ENCODE measurements at regions of chr10 and their contacts with region 1.

Region 1: GRCh38 chr10:93471110-93471651 is 11.0 kb downstream of the MYOF start:
- DNase-seq: peak; percentile 95
- ATAC-seq: peak; percentile 37
- H3K4me3 ChIP-seq: peak overlapping the region in 1 of 2 experiments; percentile 36; a peak in 1 of 4 replicates
- H3K27ac ChIP-seq: peak overlapping the region; percentile 98
- H3K4me1 ChIP-seq: peaks cover 83 to 96% of the 10 kb centered on the region in 2 experiments
- H3K27me3 ChIP-seq: no peaks in the 10 kb centered on the region
- CTCF ChIP-seq: no peak
- POLR2A ChIP-seq: no peak
- RAD21 ChIP-seq: no peak

Region 2: DNA sequence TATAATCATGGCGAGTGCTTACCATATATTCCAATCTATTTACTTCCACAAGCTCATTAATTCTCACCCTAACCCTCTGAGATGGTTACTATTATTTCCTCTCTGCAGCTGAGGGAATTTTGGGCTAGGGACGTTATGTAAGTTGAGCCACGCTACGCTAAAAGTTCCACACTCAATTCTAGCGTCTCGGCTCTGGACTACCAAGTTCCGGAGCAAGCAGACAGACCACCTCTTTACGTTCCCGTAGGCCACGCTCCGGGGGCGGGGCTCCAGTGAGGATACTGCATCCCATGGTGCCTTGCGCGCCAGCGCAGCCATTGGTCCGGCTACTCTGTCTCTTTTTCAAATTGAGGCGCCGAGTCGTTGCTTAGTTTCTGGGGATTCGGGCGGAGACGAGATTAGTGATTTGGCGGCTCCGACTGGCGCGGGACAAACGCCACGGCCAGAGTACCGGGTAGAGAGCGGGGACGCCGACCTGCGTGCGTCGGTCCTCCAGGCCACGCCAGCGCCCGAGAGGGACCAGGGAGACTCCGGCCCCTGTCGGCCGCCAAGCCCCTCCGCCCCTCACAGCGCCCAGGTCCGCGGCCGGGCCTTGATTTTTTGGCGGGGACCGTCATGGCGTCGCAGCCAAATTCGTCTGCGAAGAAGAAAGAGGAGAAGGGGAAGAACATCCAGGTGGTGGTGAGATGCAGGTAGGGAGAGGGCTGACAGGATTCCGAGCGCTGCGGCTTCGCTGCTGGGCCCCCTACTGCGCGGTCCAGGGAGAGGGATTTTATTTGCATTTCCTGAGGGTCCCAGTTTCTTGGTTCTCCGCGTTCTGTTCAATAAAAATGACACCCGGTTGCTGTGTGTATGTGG is 878.2 kb before region 1 on chr10 and contains the start of gene KIF11:
- CTCF ChIA-PET with region 1: no interaction called
- POLR2A ChIA-PET with region 1: no interaction called
- RAD21 ChIA-PET with region 1: no interaction called
- intact Hi-C with region 1: no loop called
- DNase-seq: peak; percentile 93
- ATAC-seq: peak; percentile 78
- H3K4me3 ChIP-seq: peak within 1 kb of the TSS; percentile 84 to 92
- H3K27ac ChIP-seq: peak within 1 kb of the TSS; percentile 86
- H3K4me1 ChIP-seq: peaks cover 6 to 19% of the 10 kb centered on the region in 2 experiments; a peak in 3 of 4 replicates
- H3K27me3 ChIP-seq: no peaks in the 10 kb centered on the region
- CTCF ChIP-seq: no peak
- POLR2A ChIP-seq: peak; percentile 98
- RAD21 ChIP-seq: no peak
- total RNA-seq, gene KIF11: 33.8 TPM

Region 3: DNA sequence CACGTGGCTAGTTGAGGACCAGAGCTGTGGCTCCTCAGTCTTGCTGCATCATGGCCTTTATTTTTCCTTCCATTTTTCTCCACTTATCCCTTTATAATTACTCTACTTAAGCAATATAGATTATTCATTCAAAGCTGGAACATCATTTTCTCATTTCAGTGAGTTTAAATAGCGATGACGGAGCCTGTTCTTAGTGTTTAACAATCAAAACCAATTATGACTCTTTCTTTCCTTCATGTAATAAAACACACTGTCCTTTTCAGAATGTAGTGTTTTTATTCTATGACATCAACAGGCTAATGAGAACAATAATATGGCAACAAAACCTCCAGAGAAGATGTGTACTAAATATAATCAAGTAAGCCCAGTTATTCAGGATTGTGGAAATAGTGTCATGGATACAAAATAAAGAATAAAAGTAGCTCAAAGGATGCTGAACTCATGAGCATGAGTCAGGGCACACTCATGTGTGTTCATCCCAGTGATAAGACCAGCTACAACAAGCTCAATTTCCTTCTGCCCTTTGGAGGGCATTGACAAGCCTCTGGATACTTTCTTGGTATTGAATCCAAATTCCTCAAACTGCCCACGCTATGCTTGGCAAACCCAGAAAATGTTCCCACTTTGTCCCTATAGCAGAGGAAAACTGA is 209.1 kb before region 1 on chr10:
- CTCF ChIA-PET with region 1: no interaction called
- POLR2A ChIA-PET with region 1: no interaction called
- RAD21 ChIA-PET with region 1: no interaction called
- intact Hi-C with region 1: no loop called
- DNase-seq: no peak
- ATAC-seq: no peak
- H3K4me3 ChIP-seq: no peak overlapping the region
- H3K27ac ChIP-seq: no peak overlapping the region
- H3K4me1 ChIP-seq: no peaks in the 10 kb centered on the region; a peak in 1 of 4 replicates
- H3K27me3 ChIP-seq: no peaks in the 10 kb centered on the region
- CTCF ChIP-seq: no peak
- POLR2A ChIP-seq: no peak
- RAD21 ChIP-seq: no peak

Region 4: DNA sequence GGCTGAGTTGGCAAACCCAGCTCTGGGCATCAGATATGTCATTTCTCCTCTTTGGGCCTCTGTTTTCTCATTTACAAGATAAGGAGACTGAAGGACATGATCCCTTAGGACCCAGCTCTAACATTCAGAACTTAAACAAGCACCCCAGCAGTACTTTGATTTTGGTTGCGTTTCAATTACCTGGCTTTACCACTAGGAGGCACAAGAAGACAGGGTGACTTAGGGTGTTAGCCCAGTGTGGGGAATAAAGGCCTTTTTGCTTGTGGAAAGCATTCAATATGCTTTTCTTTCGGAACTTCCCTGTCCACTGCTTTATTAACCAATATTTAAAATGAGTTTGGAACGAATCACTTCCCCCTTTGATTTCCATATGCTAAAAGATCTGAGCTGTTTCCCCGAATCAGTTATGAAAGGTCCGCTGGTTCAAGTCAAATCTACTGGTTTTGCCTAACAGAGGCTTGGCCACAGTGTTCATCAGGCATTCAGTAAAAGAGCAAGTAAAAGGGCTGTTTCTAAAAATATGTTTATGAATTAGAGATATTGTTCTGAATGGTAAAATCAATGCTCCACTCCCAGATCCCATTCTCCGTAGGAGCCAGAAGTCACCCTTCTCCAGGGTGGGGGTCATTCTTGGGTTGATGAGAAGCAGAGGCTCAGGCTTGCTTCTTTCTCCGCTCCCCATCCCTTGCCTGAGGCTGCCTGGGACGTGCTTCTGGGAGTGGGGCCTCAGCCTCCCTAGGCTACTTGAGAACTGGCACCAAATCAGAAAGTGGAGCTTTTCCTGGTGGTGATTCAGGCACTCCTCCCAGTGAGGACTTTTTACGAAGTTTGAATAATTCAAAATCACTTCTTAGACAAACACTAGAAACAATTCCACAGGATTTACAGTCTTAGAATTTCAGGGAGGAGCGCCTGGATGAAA is 94.5 kb before region 1 on chr10:
- CTCF ChIA-PET with region 1: interaction called, 27 read pairs
- POLR2A ChIA-PET with region 1: interaction called, 10 read pairs
- RAD21 ChIA-PET with region 1: interaction called in 1 of 2 experiments, 4 read pairs
- intact Hi-C with region 1: no loop called
- DNase-seq: peak; percentile 80
- ATAC-seq: peak; percentile 83
- H3K4me3 ChIP-seq: no peak overlapping the region
- H3K27ac ChIP-seq: peak overlapping the region; percentile 80
- H3K4me1 ChIP-seq: peaks cover 29 to 49% of the 10 kb centered on the region in 2 experiments
- H3K27me3 ChIP-seq: no peaks in the 10 kb centered on the region
- CTCF ChIP-seq: peak; percentile 84 to 91 (median 90); a peak in 5 of 6 replicates
- POLR2A ChIP-seq: no peak
- RAD21 ChIP-seq: peak; percentile 98

Region 5: GRCh38 chr10:93383562-93383981 is 87.6 kb before region 1 on chr10:
- CTCF ChIA-PET with region 1: interaction called, 3 read pairs
- POLR2A ChIA-PET with region 1: interaction called, 13 read pairs
- RAD21 ChIA-PET with region 1: interaction called in 1 of 2 experiments, 7 read pairs
- intact Hi-C with region 1: no loop called
- DNase-seq: no peak
- ATAC-seq: peak; percentile 69
- H3K4me3 ChIP-seq: peak overlapping the region; percentile 33 to 46
- H3K27ac ChIP-seq: peak overlapping the region; percentile 87
- H3K4me1 ChIP-seq: peaks cover 52 to 85% of the 10 kb centered on the region in 2 experiments
- H3K27me3 ChIP-seq: no peaks in the 10 kb centered on the region
- CTCF ChIP-seq: no peak
- POLR2A ChIP-seq: no peak
- RAD21 ChIP-seq: no peak

Region 6: DNA sequence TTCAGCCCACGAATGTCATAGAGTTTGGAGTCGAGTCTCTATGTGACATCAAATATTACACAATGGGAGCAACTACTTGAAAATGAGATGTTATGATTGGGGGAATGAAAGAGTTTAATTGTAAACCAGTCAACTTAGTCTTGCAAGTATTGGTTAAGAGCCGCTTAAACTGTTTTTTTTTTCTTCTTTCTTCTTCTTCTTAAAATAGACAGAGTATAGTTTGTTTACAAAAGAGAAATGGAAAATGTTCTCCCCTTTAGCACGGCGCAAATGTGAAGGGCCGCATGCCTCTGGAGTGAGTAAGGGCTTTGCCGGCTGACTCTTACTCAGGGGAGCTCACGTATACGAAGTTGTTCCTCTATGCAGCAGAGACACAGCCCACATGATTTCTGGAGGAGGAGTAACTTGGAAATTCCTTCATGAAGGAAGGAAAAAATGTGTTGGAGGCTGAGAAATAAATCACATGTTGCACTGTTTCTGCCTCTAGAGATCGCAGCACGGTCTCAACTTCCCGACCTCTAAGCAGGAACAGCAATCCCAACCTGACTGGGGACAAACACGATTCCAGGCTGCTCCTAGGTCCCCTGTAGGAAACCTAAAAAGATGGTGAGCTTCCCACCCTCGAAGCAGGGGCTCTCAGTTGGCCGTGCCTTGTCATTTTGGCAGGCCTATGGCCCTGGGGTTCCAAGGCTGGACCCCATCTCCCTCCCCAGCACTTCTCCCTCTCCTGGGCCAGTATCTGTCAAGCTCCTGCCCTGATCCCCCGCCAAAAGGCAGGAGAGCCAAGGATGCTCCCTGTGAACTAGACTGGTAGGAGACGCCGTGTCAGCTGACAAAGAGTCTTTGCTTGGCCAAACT is 33.9 kb before region 1 on chr10:
- CTCF ChIA-PET with region 1: interaction called, 4 read pairs
- POLR2A ChIA-PET with region 1: interaction called, 22 read pairs
- RAD21 ChIA-PET with region 1: interaction called in 1 of 2 experiments, 4 read pairs
- intact Hi-C with region 1: loop called (anchors 1 kb)
- DNase-seq: peak; percentile 86
- ATAC-seq: peak; percentile 79
- H3K4me3 ChIP-seq: peak overlapping the region; percentile 12 to 35
- H3K27ac ChIP-seq: peak overlapping the region; percentile 100
- H3K4me1 ChIP-seq: peaks cover 88 to 96% of the 10 kb centered on the region in 2 experiments
- H3K27me3 ChIP-seq: no peaks in the 10 kb centered on the region
- CTCF ChIP-seq: no peak
- POLR2A ChIP-seq: no peak
- RAD21 ChIP-seq: peak; percentile 22; the same call in 1 of the 2 replicates

Region 7: DNA sequence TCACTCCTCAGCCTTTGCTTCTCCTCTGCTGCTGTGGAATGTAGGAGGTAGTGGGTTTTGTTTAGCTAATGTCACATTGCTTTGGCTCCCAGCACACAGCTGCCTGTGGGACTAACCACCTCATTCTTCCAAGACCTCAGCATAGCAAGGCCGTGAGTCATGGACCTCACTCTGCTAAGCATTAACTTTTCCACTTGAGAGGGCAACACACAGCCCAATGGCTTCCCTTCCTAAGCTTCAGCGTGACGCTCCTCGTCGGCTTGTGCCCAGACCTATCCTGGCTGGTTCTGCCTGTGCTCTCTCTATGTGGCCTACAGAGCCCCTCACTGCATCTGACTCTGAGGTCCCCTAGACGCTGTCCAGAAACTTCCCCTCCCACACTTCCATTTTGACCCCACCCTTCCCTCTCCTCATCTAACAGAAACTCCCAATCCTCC is 12.3 kb before region 1 on chr10:
- CTCF ChIA-PET with region 1: no interaction called
- POLR2A ChIA-PET with region 1: interaction called, 49 read pairs
- RAD21 ChIA-PET with region 1: interaction called in 1 of 2 experiments, 3 read pairs
- intact Hi-C with region 1: no loop called
- DNase-seq: peak; percentile 97
- ATAC-seq: peak; percentile 81
- H3K4me3 ChIP-seq: peak overlapping the region; percentile 18 to 32
- H3K27ac ChIP-seq: peak overlapping the region; percentile 97
- H3K4me1 ChIP-seq: peaks cover 83 to 90% of the 10 kb centered on the region in 2 experiments
- H3K27me3 ChIP-seq: no peaks in the 10 kb centered on the region
- CTCF ChIP-seq: no peak
- POLR2A ChIP-seq: no peak
- RAD21 ChIP-seq: no peak

Region 8: GRCh38 chr10:93541402-93542357 is 70.5 kb after region 1 on chr10:
- CTCF ChIA-PET with region 1: no interaction called
- POLR2A ChIA-PET with region 1: no interaction called
- RAD21 ChIA-PET with region 1: no interaction called
- intact Hi-C with region 1: no loop called
- DNase-seq: peak; percentile 27
- ATAC-seq: peak; percentile 99
- H3K4me3 ChIP-seq: no peak overlapping the region
- H3K27ac ChIP-seq: no peak overlapping the region
- H3K4me1 ChIP-seq: no peaks in the 10 kb centered on the region
- H3K27me3 ChIP-seq: no peaks in the 10 kb centered on the region
- CTCF ChIP-seq: peak; percentile 43 to 95 (median 93); a peak in 5 of 6 replicates
- POLR2A ChIP-seq: no peak
- RAD21 ChIP-seq: peak; percentile 62

Region 9: GRCh38 chr10:93999401-93999851 is 528.2 kb after region 1 on chr10:
- CTCF ChIA-PET with region 1: no interaction called
- POLR2A ChIA-PET with region 1: no interaction called
- RAD21 ChIA-PET with region 1: no interaction called
- intact Hi-C with region 1: no loop called
- DNase-seq: no peak
- ATAC-seq: no peak
- H3K4me3 ChIP-seq: no peak overlapping the region
- H3K27ac ChIP-seq: no peak overlapping the region
- H3K4me1 ChIP-seq: peaks cover 0 to 10% of the 10 kb centered on the region in 2 experiments; a peak in 1 of 4 replicates
- H3K27me3 ChIP-seq: no peaks in the 10 kb centered on the region
- CTCF ChIP-seq: no peak
- POLR2A ChIP-seq: no peak
- RAD21 ChIP-seq: no peak

Measured in HCT116 (cell line).